Activated CD4-positive, alpha-beta T cell treated with anti-CD3 and anti-CD28 coated beads for 36 hours (primary cell): ENCODE measurements at regions of chr15 and their contacts with region 1.

Region 1: GRCh38 chr15:78308422-78309032 is 9.1 kb upstream of the SKIC8 start:
- DNase-seq: peak; percentile 81
- ATAC-seq: peak; percentile 87
- H3K4me3 Mint-ChIP-seq: no peak overlapping the region
- H3K27ac Mint-ChIP-seq: no peak overlapping the region
- H3K4me1 Mint-ChIP-seq: no peaks in the 10 kb centered on the region
- H3K27me3 Mint-ChIP-seq: peaks cover 4% of the 10 kb centered on the region

Region 2: GRCh38 chr15:78284758-78285157 is 23.8 kb before region 1 on chr15:
- CTCF ChIA-PET with region 1: no interaction called
- POLR2A ChIA-PET with region 1: no interaction called
- intact Hi-C with region 1: no loop called
- DNase-seq: no peak
- ATAC-seq: no peak
- H3K4me3 Mint-ChIP-seq: no peak overlapping the region
- H3K27ac Mint-ChIP-seq: no peak overlapping the region
- H3K4me1 Mint-ChIP-seq: no peaks in the 10 kb centered on the region
- H3K27me3 Mint-ChIP-seq: no peaks in the 10 kb centered on the region

Region 3: GRCh38 chr15:78422571-78423340 is 114.2 kb after region 1 on chr15:
- CTCF ChIA-PET with region 1: interaction called, 25 read pairs
- POLR2A ChIA-PET with region 1: no interaction called
- intact Hi-C with region 1: loop called (anchors 1 to 2 kb)
- DNase-seq: peak; percentile 80
- ATAC-seq: peak; percentile 83
- H3K4me3 Mint-ChIP-seq: no peak overlapping the region
- H3K27ac Mint-ChIP-seq: no peak overlapping the region
- H3K4me1 Mint-ChIP-seq: peaks cover 18% of the 10 kb centered on the region
- H3K27me3 Mint-ChIP-seq: no peaks in the 10 kb centered on the region

Region 4: GRCh38 chr15:78481917-78482316 is 173.4 kb after region 1 on chr15:
- CTCF ChIA-PET with region 1: no interaction called
- POLR2A ChIA-PET with region 1: no interaction called
- intact Hi-C with region 1: loop called in 1 of 2 experiments (anchors 1 kb)
- DNase-seq: no peak
- ATAC-seq: no peak
- H3K4me3 Mint-ChIP-seq: no peak overlapping the region
- H3K27ac Mint-ChIP-seq: no peak overlapping the region
- H3K4me1 Mint-ChIP-seq: peaks cover 5% of the 10 kb centered on the region
- H3K27me3 Mint-ChIP-seq: no peaks in the 10 kb centered on the region

Region 5: DNA sequence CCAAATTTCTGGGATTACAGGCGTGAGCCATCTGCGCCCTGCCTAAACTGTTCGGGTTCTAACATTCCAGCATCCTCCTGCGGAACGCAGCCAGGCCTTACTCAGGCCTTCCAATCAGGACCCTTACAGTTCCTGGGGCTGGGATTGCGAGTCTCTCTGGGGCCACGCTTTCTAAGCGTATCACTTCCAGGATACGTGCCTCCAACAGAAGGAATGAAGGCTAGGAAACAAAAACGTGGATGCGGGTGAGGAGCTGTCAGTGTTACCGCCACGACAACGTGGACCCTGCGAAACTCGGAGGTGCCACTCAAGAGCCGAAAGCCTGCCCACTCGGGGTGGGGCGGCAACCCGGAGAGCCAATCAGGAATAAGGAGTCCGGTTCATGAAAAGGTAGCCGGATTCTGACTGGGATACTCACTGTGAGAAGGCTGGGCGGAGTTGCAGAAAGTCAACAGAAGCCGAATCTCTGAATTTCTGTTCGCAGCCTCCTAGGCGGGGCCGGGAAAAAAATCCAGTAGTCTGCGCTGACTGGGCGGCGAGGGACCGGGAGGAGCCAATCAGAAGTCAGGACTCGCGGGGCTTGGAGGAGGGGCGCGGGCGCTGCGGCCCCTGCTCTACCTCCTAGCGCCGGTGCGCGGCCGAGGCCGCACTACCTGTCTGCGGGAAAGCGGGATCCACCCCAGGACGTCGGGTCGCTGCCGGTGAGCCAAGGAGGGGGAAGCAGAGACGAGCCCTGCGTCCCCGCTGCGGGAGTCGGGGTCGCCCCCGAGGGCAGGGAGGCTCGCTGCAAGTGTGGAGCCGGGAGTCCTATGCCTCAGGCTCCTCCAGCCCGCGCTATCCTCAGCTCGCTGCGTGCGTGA is 198.7 kb after region 1 on chr15 and contains the start of gene HYKK:
- CTCF ChIA-PET with region 1: no interaction called
- POLR2A ChIA-PET with region 1: no interaction called
- intact Hi-C with region 1: loop called in 1 of 2 experiments (anchors 10 kb)
- DNase-seq: peak; percentile 87
- ATAC-seq: peak; percentile 91
- H3K4me3 Mint-ChIP-seq: peak within 1 kb of the TSS; percentile 77
- H3K27ac Mint-ChIP-seq: peak within 1 kb of the TSS; percentile 58
- H3K4me1 Mint-ChIP-seq: peaks cover 22% of the 10 kb centered on the region
- H3K27me3 Mint-ChIP-seq: no peaks in the 10 kb centered on the region
- total RNA-seq, gene HYKK: 2.5 to 4.2 TPM

Region 6: DNA sequence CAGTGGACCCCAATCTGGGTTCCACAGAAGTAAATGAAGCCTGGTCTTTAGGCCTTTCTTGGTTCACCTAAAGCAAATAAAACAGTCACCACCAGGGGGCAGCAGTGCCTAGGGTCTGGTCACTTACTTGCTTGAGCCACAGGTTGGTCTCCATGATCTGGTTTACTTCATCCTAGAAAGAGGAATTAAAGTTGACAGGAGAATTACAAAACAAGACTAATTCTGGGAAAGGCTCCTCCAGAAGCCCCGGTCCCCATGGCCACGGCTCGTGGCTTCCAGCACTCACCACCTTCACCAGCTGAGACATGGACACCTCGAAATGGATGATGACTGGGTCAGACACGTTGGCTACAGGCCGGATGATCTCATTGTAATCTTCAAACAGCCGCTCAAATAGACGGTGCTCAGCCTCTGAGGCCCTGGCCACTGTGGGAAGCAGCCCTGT is 310.0 kb after region 1 on chr15:
- CTCF ChIA-PET with region 1: no interaction called
- POLR2A ChIA-PET with region 1: no interaction called
- intact Hi-C with region 1: loop called in 1 of 2 experiments (anchors 5 kb)
- DNase-seq: peak; percentile 90
- ATAC-seq: peak; percentile 49
- H3K4me3 Mint-ChIP-seq: no peak overlapping the region
- H3K27ac Mint-ChIP-seq: no peak overlapping the region
- H3K4me1 Mint-ChIP-seq: peaks cover 11% of the 10 kb centered on the region
- H3K27me3 Mint-ChIP-seq: peaks cover 33% of the 10 kb centered on the region

Region 7: GRCh38 chr15:78709263-78709882 is 400.8 kb after region 1 on chr15:
- CTCF ChIA-PET with region 1: no interaction called
- POLR2A ChIA-PET with region 1: no interaction called
- intact Hi-C with region 1: loop called in 1 of 2 experiments (anchors 1 kb)
- DNase-seq: peak; percentile 84
- ATAC-seq: peak; percentile 98
- H3K4me3 Mint-ChIP-seq: no peak overlapping the region
- H3K27ac Mint-ChIP-seq: no peak overlapping the region
- H3K4me1 Mint-ChIP-seq: no peaks in the 10 kb centered on the region
- H3K27me3 Mint-ChIP-seq: peaks cover 27% of the 10 kb centered on the region

Region 8: DNA sequence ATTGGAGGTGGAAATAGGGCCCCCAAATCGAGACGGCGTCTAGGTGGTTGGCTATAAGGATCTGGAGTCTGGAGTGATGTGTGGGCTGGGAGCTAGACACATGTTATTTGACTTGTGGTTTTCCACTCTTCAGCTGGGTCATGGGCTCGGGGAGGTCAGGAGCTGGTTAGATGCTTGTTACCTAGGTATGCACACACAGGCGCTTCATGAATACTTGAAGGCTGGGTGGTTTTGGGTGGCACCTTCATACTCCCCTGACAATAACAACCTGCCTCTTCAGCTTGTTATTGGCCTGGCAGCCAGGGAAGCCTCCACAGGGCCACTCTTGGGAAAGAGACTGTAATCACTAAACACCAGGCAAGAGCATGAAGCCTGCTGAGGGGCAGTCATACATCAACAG is 646.4 kb after region 1 on chr15:
- CTCF ChIA-PET with region 1: no interaction called
- POLR2A ChIA-PET with region 1: no interaction called
- intact Hi-C with region 1: no loop called
- DNase-seq: no peak
- ATAC-seq: no peak
- H3K4me3 Mint-ChIP-seq: no peak overlapping the region
- H3K27ac Mint-ChIP-seq: no peak overlapping the region
- H3K4me1 Mint-ChIP-seq: peaks cover 7% of the 10 kb centered on the region
- H3K27me3 Mint-ChIP-seq: no peaks in the 10 kb centered on the region